ENCODE measurements at regions of chr1 and their contacts with region 1.

Region 1: DNA sequence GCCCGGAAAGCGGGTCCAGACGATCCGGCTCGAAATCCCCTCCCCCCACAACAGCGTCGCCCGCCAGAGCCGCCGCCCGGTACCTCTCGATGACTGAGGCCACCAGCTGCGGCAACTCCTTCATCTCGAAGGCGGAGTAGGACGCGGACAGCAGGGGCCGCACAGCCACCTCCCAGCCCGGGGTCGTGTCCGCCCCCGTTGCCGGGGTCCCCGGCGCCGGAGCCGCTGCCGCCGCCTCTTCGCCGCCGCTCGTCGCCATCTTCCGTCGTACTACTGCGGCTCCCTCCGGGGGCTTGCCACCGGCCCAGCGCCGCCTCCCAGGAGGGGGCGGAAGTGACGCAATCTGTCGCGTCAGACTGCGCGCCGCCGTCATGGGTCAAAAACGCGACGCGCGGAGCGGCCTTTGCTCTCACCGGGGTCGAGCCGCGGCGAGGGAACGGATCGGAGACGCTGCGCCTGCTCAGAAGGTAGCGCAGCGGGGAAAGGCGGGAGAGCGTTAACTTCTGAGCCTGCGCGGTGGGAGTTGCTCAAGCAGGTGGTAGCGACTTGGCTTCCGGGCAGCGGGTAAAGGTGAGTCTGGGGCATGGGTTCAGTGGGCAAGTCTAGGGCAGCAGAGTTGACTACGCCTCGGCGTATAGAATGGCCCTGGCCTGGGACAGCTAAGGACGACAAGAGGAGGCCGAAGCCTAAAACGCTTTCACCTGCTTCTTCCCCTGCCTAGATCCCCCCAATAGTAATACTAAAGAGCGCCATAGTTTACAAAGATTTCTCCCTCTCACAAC is at the start of gene UBR4:
- DNase-seq: peak; percentile 97
- H3K4me3 Mint-ChIP-seq: peak within 1 kb of the TSS; percentile 90
- H3K27ac Mint-ChIP-seq: peak within 1 kb of the TSS; percentile 95
- H3K4me1 Mint-ChIP-seq: peaks cover 69% of the 10 kb centered on the region
- H3K27me3 Mint-ChIP-seq: no peaks in the 10 kb centered on the region
- total RNA-seq, gene UBR4: 165 to 169 TPM

Region 2: DNA sequence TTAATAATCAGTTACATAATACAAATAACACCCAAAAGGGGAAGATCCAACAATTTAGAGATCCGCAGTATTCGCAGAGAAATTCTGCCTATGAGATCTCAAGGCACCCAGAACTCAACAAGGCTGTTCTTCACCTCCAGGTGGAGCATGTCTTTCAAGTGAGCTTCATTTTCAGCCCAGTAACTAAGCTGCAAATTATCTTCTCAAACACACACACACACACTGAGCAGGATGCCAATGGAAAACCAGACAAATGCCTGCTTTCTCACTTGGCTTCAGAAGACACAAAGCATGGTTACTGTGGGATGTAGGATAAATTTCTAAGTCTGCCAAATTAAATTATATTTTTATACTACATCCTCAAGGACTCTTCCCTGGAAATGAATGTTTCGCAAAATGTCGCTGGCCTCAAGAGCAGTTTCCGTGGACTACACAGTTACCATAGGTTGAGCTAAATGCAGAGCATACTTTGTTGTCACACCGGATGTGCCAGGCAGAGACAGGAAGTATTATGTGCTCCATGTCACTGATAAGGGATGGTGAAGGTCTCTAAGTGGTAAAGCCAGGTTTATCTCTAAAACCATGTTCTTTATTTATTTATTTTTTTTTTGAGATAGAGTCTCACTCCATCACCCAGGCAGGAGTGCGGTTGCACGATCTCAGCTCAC is 30.4 kb before region 1 on chr1:
- CTCF ChIA-PET with region 1: interaction called, 12 read pairs
- intact Hi-C with region 1: no loop called
- DNase-seq: peak; percentile 52
- H3K4me3 Mint-ChIP-seq: no peak overlapping the region
- H3K27ac Mint-ChIP-seq: peak overlapping the region; percentile 54
- H3K4me1 Mint-ChIP-seq: peaks cover 18% of the 10 kb centered on the region
- H3K27me3 Mint-ChIP-seq: no peaks in the 10 kb centered on the region

Region 3: GRCh38 chr1:19251305-19252196 is 41.4 kb after region 1 on chr1 and contains the starts of genes EMC1 and MRTO4:
- CTCF ChIA-PET with region 1: no interaction called
- intact Hi-C with region 1: loop called (anchors 1 kb)
- DNase-seq: peak; percentile 90
- H3K4me3 Mint-ChIP-seq: peak within 1 kb of the TSS; percentile 85
- H3K27ac Mint-ChIP-seq: peak within 1 kb of the TSS; percentile 90
- H3K4me1 Mint-ChIP-seq: peaks cover 47% of the 10 kb centered on the region
- H3K27me3 Mint-ChIP-seq: no peaks in the 10 kb centered on the region
- total RNA-seq, gene EMC1: 40.2 to 43.2 TPM
- total RNA-seq, gene MRTO4: 53.2 to 54.3 TPM

Region 4: GRCh38 chr1:19273106-19273843 is 63.1 kb after region 1 on chr1:
- CTCF ChIA-PET with region 1: no interaction called
- intact Hi-C with region 1: no loop called
- DNase-seq: no peak
- H3K4me3 Mint-ChIP-seq: no peak overlapping the region
- H3K27ac Mint-ChIP-seq: no peak overlapping the region
- H3K4me1 Mint-ChIP-seq: peaks cover 2% of the 10 kb centered on the region
- H3K27me3 Mint-ChIP-seq: peaks cover 15% of the 10 kb centered on the region